Calu3 (cell line): ENCODE measurements at regions of chr10 and their contacts with region 1.

Region 1: GRCh38 chr10:89793649-89794254 is 92.4 kb downstream of the KIF20B start:
- DNase-seq: peak; percentile 39
- H3K4me3 Mint-ChIP-seq: no peak overlapping the region
- H3K27ac Mint-ChIP-seq: no peak overlapping the region
- H3K4me1 Mint-ChIP-seq: no peaks in the 10 kb centered on the region
- H3K27me3 Mint-ChIP-seq: no peaks in the 10 kb centered on the region
- CTCF ChIP-seq: peak; percentile 56

Region 2: GRCh38 chr10:89653410-89653869 is 140.3 kb before region 1 on chr10:
- CTCF ChIA-PET with region 1: no interaction called
- intact Hi-C with region 1: no loop called
- DNase-seq: peak; percentile 62
- H3K4me3 Mint-ChIP-seq: peak overlapping the region; percentile 52
- H3K27ac Mint-ChIP-seq: peak overlapping the region; percentile 48
- H3K4me1 Mint-ChIP-seq: peaks cover 16% of the 10 kb centered on the region
- H3K27me3 Mint-ChIP-seq: no peaks in the 10 kb centered on the region
- CTCF ChIP-seq: no peak

Region 3: GRCh38 chr10:90288391-90288933 is 494.7 kb after region 1 on chr10:
- CTCF ChIA-PET with region 1: no interaction called
- intact Hi-C with region 1: loop called (anchors 10 kb)
- DNase-seq: peak; percentile 1
- H3K4me3 Mint-ChIP-seq: no peak overlapping the region
- H3K27ac Mint-ChIP-seq: peak overlapping the region; percentile 32
- H3K4me1 Mint-ChIP-seq: peaks cover 9% of the 10 kb centered on the region
- H3K27me3 Mint-ChIP-seq: no peaks in the 10 kb centered on the region
- CTCF ChIP-seq: no peak

Region 4: GRCh38 chr10:90592638-90593302 is 799.0 kb after region 1 on chr10:
- CTCF ChIA-PET with region 1: no interaction called
- intact Hi-C with region 1: loop called (anchors 2 kb)
- DNase-seq: peak; percentile 38
- H3K4me3 Mint-ChIP-seq: no peak overlapping the region
- H3K27ac Mint-ChIP-seq: no peak overlapping the region
- H3K4me1 Mint-ChIP-seq: peaks cover 7% of the 10 kb centered on the region
- H3K27me3 Mint-ChIP-seq: peaks cover 62% of the 10 kb centered on the region
- CTCF ChIP-seq: no peak

Region 5: DNA sequence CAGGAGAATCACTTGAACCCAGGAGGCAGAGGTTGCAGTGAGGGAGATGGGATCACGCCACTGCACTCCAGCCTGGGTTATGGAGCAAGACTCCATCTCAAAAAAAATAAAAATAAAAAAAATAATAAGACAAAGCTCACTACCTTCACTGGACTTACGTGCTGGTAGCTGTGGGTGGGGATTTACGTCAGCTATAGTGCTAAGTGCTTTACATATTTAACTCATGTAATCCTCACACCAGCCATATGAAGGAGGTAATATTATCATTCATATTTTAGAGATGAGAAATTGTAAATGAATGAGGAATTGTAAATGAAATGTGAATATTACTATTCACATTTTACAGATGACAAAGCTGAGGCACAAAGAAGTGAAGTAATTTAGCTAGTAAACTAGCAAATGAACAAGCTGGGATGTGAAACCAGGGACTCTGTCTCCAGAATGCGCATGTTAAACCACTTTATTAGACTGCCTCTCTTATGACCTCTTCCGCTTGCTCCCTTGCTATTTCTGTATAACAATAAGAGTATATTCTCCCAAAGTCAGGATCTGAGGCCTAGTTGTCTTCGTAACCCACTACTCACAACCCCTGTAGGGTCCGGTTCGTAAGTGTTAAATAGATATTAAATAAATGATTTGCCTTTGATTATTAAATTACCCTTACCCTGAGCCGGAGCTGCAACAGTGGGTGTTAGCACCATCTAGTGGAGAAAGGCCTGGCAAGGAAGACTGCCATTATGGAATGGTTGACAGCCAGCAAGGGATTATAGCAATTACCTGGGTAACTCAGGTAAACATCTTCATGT is 993.8 kb after region 1 on chr10:
- CTCF ChIA-PET with region 1: no interaction called
- intact Hi-C with region 1: loop called (anchors 1 kb)
- DNase-seq: peak; percentile 53
- H3K4me3 Mint-ChIP-seq: no peak overlapping the region
- H3K27ac Mint-ChIP-seq: no peak overlapping the region
- H3K4me1 Mint-ChIP-seq: no peaks in the 10 kb centered on the region
- H3K27me3 Mint-ChIP-seq: peaks cover 78% of the 10 kb centered on the region
- CTCF ChIP-seq: peak; percentile 43